ENCODE measurements at regions of chr16 and their contacts with region 1.

Region 1: GRCh38 chr16:53435066-53435688 is 906 bp downstream of the RBL2 start:
- DNase-seq: peak; percentile 78 to 79
- ATAC-seq: peak; percentile 90
- H3K4me3 ChIP-seq: peak overlapping the region; percentile 60 to 80
- H3K27ac ChIP-seq: peak overlapping the region; percentile 29 to 89
- H3K4me1 ChIP-seq: no peaks in the 10 kb centered on the region
- H3K27me3 ChIP-seq: no peaks in the 10 kb centered on the region

Region 2: GRCh38 chr16:53482123-53482522 is 46.9 kb after region 1 on chr16:
- intact Hi-C with region 1: no loop called
- DNase-seq: no peak
- ATAC-seq: no peak
- H3K4me3 ChIP-seq: no peak overlapping the region
- H3K27ac ChIP-seq: no peak overlapping the region
- H3K4me1 ChIP-seq: no peaks in the 10 kb centered on the region
- H3K27me3 ChIP-seq: no peaks in the 10 kb centered on the region

Region 3: GRCh38 chr16:53503270-53503923 is 68.2 kb after region 1 on chr16:
- intact Hi-C with region 1: loop called (anchors 1 to 5 kb)
- DNase-seq: peak; percentile 100
- ATAC-seq: peak; percentile 97
- H3K4me3 ChIP-seq: peak overlapping the region; percentile 8 to 62
- H3K27ac ChIP-seq: peak overlapping the region; percentile 73 to 78
- H3K4me1 ChIP-seq: peaks cover 0 to 4% of the 10 kb centered on the region in 2 donors
- H3K27me3 ChIP-seq: no peaks in the 10 kb centered on the region

Region 4: GRCh38 chr16:53530046-53530445 is 94.9 kb after region 1 on chr16:
- intact Hi-C with region 1: no loop called
- DNase-seq: no peak
- ATAC-seq: no peak
- H3K4me3 ChIP-seq: no peak overlapping the region
- H3K27ac ChIP-seq: no peak overlapping the region
- H3K4me1 ChIP-seq: no peaks in the 10 kb centered on the region
- H3K27me3 ChIP-seq: no peaks in the 10 kb centered on the region

Region 5: GRCh38 chr16:53549970-53550690 is 115.0 kb after region 1 on chr16:
- intact Hi-C with region 1: no loop called
- DNase-seq: no peak
- ATAC-seq: peak; percentile 74
- H3K4me3 ChIP-seq: no peak overlapping the region
- H3K27ac ChIP-seq: no peak overlapping the region
- H3K4me1 ChIP-seq: no peaks in the 10 kb centered on the region
- H3K27me3 ChIP-seq: no peaks in the 10 kb centered on the region